GM23248 (cell line): ENCODE measurements at regions of chr5 and their contacts with region 1.

Region 1: GRCh38 chr5:43389679-43390329 is 22.4 kb downstream of the CCL28 start:
- DNase-seq: peak; percentile 93
- H3K4me3 ChIP-seq: no peak overlapping the region
- H3K27ac ChIP-seq: no peak overlapping the region
- H3K4me1 ChIP-seq: no peaks in the 10 kb centered on the region
- H3K27me3 ChIP-seq: no peaks in the 10 kb centered on the region

Region 2: DNA sequence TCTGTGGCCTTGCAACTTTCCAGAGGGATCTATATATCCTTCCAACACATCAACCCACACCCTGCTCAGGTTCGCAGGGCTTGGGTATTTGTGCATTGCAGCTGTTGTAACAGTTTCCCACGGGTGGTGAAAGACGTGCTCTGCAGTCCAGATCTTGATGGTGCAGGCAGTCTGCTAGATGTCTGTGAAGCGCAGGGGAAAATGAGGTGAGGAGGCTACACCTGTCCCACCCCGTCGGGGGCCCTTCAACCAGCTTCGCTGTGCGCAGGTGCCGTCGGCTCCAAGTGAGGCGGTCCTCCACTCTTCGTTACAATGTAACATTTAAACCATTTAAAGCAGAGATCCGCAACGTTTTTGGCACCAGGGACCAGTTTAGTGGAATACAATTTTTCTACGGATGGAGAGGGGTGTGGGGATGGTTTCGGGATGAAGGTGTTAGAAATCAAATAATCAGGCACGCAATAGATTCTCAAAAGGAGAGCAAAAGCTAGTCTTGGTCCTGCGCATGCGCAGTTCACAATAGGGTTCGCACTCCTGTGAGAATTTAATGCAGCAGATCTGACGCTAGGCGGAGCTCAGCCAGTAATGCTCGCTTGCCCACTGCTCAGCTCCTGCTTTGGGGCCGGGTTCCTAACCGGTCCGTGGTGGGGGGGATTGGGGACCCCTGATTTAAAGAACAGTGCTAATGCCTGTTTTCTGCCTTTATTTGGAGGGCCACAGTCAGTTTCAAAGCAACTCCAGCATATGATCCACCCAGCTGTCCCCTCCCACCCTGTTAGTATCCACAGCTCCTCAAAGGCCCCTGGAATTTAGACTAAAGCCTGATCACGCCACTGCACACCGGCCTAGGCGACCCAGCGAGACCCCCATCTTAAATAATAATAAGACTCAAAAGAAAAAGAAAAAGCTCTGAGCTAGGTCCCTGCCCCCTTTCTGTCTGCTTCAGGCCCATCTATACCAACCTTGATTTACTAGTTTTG is 481.0 kb before region 1 on chr5:
- in situ Hi-C with region 1: loop called (anchors 25 kb)
- DNase-seq: peak; percentile 93
- H3K4me3 ChIP-seq: peak overlapping the region; percentile 76
- H3K27ac ChIP-seq: no peak overlapping the region
- H3K4me1 ChIP-seq: no peaks in the 10 kb centered on the region
- H3K27me3 ChIP-seq: peaks cover 29% of the 10 kb centered on the region

Region 3: DNA sequence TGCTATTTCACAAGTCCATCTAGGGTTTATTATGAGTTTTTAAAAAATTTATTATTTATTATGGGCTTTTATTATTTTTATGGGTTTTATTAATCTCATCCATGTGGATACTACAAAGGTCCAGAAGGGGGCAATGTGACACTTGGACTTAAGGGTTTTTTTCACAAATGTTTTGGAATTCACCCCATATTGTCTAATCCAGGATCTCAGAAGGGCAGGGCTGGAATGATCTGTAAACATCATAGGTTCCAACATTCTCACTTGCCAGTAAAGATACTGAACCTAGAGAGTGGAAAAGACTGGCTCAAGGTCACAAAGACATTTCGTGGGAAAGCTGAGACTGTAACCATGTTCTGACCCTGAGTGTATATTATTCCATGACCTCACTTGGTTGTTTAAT is 162.1 kb before region 1 on chr5:
- in situ Hi-C with region 1: loop called (anchors 10 kb)
- DNase-seq: peak; percentile 82
- H3K4me3 ChIP-seq: no peak overlapping the region
- H3K27ac ChIP-seq: no peak overlapping the region
- H3K4me1 ChIP-seq: no peaks in the 10 kb centered on the region
- H3K27me3 ChIP-seq: no peaks in the 10 kb centered on the region